Heart left ventricle (tissue), 16 donors: ENCODE measurements at regions of chr1 and their contacts with region 1.

Region 1: DNA sequence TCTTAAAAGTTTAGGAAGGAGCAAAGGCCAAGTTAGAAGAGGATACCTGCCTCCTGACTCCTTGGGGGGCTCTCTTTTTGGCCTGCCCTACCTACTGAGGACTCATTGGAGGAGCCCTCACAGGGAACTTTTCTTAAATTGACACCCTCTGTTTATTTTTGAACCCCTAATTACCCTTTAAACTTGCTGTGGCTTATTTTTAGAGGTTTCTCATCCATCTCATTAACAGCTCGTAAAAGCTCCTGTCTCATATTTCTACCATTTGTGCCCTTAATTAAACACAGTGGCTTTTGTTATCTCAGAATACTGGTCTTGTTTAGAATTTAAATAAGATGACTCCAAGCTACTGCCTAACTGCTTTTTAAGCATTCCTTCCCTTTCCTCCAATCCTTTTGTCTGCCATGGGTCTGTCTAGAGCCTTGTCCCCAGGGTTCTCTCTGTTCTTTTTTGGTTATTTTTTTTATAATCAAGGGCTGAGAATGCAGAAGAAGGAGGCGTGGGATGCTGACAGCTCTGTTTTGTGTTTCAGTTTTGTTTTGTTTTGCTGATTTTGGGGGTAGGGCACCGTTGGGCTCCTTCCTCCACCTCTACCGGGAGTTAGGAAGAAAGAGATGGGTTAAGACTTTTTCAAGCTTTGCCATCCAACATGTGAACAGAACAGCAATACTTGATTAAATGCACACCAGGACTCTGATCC is 78.0 kb downstream of the SYT6 start:
- DNase-seq: no peak
- ATAC-seq: no peak
- H3K4me3 ChIP-seq: no peak overlapping the region
- H3K27ac ChIP-seq: no peak overlapping the region
- H3K4me1 ChIP-seq: peaks cover 0 to 20% (median 0%) of the 10 kb centered on the region in 12 donors
- H3K27me3 ChIP-seq: no peaks in the 10 kb centered on the region
- CTCF ChIP-seq: no peak
- POLR2A ChIP-seq: no peak

Region 2: DNA sequence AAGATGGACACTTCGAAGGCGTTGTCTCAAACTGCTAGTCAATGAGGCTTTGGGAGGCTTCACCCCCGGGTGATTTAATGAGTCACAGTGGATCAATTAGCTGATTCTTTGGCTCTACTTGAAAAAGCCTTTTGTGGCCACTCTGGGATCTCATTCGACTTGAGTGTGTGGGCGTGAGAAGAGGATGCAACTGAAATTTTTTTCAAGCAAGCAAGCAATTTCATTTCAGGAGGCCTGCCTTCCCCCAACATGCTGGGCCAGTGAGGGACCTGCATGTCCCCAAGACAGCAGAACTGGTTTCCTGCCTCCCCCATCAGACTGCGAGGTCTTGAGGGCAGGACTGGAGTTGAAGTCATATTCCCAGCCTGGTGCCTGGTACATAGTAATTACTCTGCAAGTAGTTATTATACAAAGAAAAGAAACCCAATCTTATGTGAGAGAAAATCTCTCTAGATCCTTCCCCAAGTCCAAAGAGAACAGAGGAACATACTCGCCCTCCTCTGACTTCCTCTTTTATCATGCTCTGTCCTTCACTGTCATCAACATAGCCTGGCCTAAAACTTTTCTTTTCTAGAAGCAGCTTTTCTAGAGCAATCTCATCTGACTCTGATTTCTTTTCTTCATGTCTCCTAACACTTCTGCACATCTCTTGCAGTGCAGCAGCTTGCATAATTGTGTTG is 55.3 kb after region 1 on chr1:
- intact Hi-C with region 1: loop called in 1 of 10 experiments (anchors 10 kb)
- DNase-seq: no peak
- ATAC-seq: no peak
- H3K4me3 ChIP-seq: no peak overlapping the region
- H3K27ac ChIP-seq: peak overlapping the region in 1 of 12 donors; percentile 44
- H3K4me1 ChIP-seq: peaks cover 0 to 29% (median 0%) of the 10 kb centered on the region in 12 donors
- H3K27me3 ChIP-seq: peaks cover 0 to 13% (median 0%) of the 10 kb centered on the region in 9 donors
- CTCF ChIP-seq: no peak
- POLR2A ChIP-seq: no peak

Region 3: GRCh38 chr1:114224196-114224907 is 148.7 kb after region 1 on chr1:
- intact Hi-C with region 1: no loop called
- DNase-seq: no peak
- ATAC-seq: peak in 1 of 4 donors; percentile 37
- H3K4me3 ChIP-seq: no peak overlapping the region
- H3K27ac ChIP-seq: no peak overlapping the region
- H3K4me1 ChIP-seq: peaks cover 0 to 11% (median 1%) of the 10 kb centered on the region in 12 donors
- H3K27me3 ChIP-seq: no peaks in the 10 kb centered on the region
- CTCF ChIP-seq: no peak
- POLR2A ChIP-seq: no peak